GM18951 (cell line): ENCODE measurements at regions of chr3 and their contacts with region 1.

Region 1: DNA sequence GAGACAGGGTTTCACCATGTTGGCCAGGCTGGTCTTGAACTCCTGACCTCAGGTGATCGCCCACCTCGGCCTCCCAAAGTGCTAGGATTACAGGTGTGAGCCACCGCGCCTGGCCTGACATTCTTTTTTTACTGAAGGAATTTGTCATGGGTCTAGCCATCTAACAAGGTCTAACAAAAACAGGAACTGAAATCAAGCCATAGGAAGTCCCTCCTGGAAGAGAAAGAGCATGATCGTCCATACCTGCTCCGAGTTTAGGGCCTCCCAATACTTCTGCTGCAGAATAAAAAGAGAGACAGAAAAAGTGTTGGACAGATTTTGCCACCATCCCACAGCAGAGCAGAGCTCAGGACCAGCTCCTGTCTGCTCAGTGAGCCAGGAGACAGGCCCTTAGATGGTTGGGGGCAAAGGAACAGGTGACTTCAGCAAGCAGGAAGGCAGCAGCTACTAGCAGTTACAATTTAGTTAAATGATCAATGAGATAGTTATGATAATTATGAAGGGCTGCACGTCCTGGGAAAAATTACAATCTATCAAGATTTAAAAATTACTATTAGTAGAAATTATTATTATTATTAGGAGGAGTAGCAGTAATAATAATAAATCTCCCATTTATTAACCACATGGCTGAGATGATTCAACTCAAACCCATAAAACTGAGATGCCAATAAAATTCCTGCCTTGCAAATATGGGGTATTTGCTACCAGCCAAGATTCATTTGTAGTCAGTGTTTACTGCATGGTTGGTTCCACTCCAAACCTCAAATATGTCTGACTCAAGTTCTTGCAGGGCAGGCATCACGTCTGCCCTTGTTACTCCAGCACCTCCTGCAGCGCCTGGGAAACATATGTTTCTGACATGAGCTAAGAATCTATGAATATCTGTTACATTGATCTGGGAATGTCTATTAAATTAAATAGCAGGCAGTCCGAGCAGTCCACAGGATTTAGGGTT is 40.1 kb downstream of the TMEM44 start:
- POLR2A ChIP-seq: no peak

Region 2: DNA sequence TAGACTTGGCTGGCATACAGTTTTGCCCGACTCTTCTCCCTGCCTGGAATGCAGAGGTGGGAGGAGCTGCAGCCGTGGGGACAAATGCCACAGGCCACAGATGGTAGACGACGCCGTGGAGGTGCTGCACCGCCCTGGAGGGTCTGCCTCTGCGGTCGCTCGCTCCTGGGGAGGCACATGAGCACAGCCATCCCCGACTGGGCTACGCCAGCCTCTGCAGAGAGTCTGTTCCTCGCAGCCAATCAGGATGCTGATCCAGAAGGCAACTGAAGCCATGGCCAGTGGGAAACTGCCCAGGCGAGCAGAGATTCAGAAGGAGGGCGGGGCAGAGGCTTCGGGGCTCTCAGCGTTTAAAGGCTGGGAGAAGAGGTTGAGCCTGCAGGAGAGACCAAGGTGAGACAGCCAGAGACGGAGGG is 211.6 kb before region 1 on chr3:
- in situ Hi-C with region 1: no loop called
- POLR2A ChIP-seq: no peak

Region 3: GRCh38 chr3:194472290-194472920 is 120.7 kb before region 1 on chr3:
- in situ Hi-C with region 1: loop called (anchors 10 kb)
- POLR2A ChIP-seq: no peak

Region 4: DNA sequence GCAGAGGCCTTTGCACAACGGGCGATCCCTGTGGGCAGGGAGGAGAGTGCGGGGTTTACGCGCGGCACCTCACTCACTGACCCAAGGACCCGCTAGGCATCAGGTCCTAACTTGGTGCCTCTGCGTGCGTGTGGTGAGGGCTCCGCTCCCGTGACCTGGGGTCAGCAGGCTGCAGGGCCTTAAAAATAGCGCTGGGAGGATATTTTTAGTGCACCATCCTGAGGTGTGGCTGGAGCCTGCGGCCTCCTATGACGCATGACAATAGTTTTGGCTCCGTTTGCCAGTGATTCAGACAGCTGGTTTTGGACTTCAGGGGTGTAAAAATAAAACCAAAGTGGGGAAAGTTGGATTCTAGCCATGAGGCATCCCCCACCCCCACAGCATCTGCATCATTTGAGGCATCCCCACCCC is 231.6 kb after region 1 on chr3:
- in situ Hi-C with region 1: no loop called
- POLR2A ChIP-seq: no peak